CD4-positive, alpha-beta T cell (primary cell): ENCODE measurements at regions of chr17 and their contacts with region 1.

Region 1: GRCh38 chr17:11446316-11446715 is 152.0 kb upstream of the DNAH9 start:
- DNase-seq: no peak
- ATAC-seq: no peak
- H3K4me3 ChIP-seq: no peak overlapping the region
- H3K4me3 Mint-ChIP-seq: no peak overlapping the region
- H3K27ac ChIP-seq: no peak overlapping the region
- H3K27ac Mint-ChIP-seq: no peak overlapping the region
- H3K4me1 ChIP-seq: no peaks in the 10 kb centered on the region
- H3K4me1 Mint-ChIP-seq: no peaks in the 10 kb centered on the region
- H3K27me3 ChIP-seq: no peaks in the 10 kb centered on the region
- H3K27me3 Mint-ChIP-seq: no peaks in the 10 kb centered on the region
- CTCF ChIP-seq: no peak

Region 2: DNA sequence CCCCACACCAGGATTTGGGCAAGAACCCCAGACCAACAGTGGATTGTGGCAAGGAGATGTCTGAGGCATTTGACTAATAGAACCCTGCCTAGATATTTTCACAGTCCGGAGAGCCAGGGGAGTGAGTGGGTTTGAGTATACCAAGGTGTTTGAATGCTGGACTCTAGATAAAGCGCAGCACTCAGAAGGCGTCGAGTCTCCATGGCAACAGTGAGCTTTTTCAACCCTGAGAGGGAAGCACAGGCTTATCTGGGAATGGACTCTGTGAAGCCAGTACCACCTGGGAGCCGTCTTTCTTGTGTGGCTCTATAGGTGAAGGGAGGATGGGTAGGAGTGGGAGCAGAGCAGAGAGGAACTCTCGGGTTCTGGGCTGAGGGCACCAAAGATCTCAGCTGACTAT is 58.3 kb before region 1 on chr17:
- CTCF ChIA-PET with region 1: no interaction called
- POLR2A ChIA-PET with region 1: no interaction called
- intact Hi-C with region 1: loop called in 1 of 2 experiments (anchors 10 kb)
- DNase-seq: no peak
- ATAC-seq: no peak
- H3K4me3 ChIP-seq: no peak overlapping the region
- H3K4me3 Mint-ChIP-seq: no peak overlapping the region
- H3K27ac ChIP-seq: no peak overlapping the region
- H3K27ac Mint-ChIP-seq: no peak overlapping the region
- H3K4me1 ChIP-seq: no peaks in the 10 kb centered on the region
- H3K4me1 Mint-ChIP-seq: no peaks in the 10 kb centered on the region
- H3K27me3 ChIP-seq: no peaks in the 10 kb centered on the region
- H3K27me3 Mint-ChIP-seq: no peaks in the 10 kb centered on the region
- CTCF ChIP-seq: no peak